HEK293T (cell line): ENCODE measurements at regions of chr22 and their contacts with region 1.

Region 1: DNA sequence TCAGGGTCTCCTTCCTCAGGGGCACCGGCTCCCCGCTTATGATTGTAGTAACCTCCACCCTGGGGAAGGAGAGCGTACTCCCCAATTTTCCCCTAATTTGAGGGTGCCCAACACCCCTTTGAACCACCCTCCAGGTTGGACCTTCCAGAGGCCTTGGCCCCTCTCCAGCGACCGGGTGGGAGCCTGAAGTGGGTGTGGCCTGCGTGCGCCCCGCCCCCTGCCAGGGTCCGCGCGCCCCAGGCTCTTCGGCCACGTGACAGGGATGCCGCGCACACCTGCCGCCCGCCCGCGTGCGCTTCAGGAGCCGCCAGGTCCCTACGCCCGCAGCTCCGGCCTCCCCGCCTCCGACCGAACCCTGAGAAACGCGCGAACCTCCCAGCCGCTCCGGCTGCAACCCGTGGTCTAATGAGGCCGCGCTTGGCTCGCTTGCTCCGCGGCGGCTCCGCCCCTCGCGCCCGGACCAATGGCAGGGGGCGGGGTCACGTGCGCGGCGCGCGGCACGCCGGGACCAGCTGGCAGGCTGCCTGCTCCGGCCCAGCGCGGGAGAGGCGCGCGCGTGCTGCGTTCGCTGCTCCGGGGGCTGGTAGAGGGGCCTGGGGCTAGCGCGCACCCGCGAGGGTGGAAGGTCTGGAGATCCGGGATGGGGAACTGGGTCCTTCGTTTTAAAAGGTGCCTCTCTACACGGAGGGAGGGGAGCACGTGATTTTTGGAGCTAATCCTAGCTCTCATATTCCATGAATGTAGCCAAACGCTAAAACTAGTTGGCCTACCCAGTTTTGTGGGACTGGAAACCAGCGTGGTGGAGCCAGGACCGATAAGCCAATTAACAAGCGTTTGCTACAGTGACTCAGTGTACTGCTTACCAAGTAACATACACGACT is at the start of gene FOXRED2:
- DNase-seq: peak; percentile 99

Region 2: GRCh38 chr22:36439481-36440271 is 67.2 kb before region 1 on chr22:
- CTCF ChIA-PET with region 1: no interaction called
- POLR2A ChIA-PET with region 1: no interaction called
- DNase-seq: peak; percentile 24

Region 3: DNA sequence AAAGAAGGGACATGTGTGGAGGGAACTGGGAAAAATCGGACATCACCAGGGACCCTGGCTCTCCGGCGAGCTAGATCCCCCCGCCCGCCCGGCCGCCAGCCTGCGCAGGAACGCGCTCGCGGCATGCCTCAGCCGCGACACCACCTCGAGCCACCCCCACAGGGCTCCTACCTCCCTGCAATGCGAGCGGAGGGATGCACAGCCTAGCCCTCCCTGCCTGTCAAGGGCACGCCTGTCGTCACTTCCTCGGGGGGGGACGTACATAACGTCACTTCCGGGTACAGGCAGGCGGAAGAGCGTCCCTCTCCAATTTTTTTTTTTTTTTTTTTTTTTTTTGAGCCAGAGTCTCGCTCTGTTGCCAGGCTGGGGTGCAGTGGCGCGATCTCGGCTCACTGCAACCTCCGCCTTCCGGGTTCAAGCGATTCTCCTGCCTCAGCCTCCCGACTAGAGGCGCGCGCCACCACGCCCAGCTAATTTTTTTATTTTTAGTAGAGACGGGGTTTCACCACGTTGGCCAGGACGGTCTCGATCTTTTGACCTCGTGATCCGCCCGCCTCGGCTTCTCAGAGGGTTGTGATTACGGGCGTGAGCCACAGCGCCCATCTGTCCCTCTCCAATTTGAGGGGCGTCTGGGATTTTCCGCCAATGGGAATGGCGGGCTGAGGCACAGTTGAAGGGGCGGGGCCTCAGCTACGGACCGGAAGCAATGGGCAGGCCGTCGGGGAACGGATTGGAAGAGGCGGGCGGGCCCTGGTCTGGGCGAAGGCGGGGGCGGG is 25.3 kb before region 1 on chr22 and contains the start of gene TXN2:
- CTCF ChIA-PET with region 1: no interaction called
- POLR2A ChIA-PET with region 1: interaction called, 11 read pairs
- DNase-seq: peak; percentile 98

Region 4: GRCh38 chr22:36493690-36494110 is 13.2 kb before region 1 on chr22:
- CTCF ChIA-PET with region 1: interaction called, 4 read pairs
- POLR2A ChIA-PET with region 1: interaction called, 10 read pairs
- DNase-seq: no peak

Region 5: GRCh38 chr22:36522662-36523061 is 15.8 kb after region 1 on chr22:
- CTCF ChIA-PET with region 1: interaction called, 8 read pairs
- POLR2A ChIA-PET with region 1: interaction called, 30 read pairs
- DNase-seq: no peak